Left ventricle myocardium superior (tissue), 1 donor: ENCODE measurements at regions of chr19 and their contacts with region 1.

Region 1: DNA sequence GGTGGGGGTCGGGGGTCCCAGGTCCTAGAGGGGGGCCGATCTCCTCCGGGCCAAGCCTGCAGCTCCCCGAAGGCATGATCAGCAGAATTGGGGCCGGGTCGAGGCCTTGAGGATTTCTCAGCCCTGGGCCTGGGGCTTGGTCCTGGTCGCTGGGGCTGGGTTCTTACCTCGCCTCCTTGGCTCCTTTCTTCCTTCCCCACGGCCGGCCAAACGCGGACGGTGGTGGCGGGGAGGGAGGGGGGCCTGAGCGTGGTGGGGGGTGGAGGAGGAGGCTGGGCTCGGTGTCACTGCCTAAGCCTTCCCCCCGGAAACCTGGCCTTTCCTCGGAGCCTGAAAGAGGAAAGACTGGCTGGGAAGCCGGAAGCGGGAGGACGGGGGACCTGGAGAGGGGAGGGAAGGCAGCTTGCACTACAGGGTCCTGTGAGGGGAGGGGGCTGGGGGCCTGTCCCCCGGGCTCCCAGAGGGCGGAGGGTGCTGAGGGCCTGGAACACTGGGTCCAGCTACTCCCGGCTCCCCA is at the start of gene ZNF579:
- DNase-seq: peak; percentile 89
- ATAC-seq: peak; percentile 89
- total RNA-seq, gene ZNF579: 14.7 TPM

Region 2: GRCh38 chr19:55546822-55547616 is 33.7 kb before region 1 on chr19:
- intact Hi-C with region 1: loop called (anchors 2 kb)
- DNase-seq: peak; percentile 91
- ATAC-seq: peak; percentile 83

Region 3: DNA sequence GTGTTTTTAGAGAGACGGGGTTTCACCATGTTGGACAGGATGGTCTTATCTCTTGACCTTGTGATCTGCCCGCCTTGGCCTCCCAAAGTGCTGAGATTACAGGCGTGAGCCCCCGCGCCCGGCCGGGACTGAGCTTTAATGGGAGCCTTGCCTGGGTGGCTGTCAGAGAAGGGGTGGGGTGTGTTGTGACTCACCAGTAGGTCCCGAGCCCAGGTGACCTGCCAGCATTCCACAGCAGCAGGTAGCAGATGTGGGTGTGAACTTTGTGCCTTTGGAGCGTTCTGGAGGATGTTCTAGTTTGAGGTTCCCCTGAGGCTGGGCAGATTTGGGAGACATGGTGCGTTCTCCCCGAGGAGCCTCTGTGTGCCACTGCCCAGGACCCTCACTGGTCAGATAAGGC is 87.3 kb after region 1 on chr19:
- intact Hi-C with region 1: no loop called
- DNase-seq: no peak
- ATAC-seq: no peak